Naive thymus-derived CD4-positive, alpha-beta T cell (primary cell): ENCODE measurements at regions of chr15 and their contacts with region 1.

Region 1: GRCh38 chr15:85330901-85331588 is 49.4 kb upstream of the AKAP13 start:
- DNase-seq: peak; percentile 12 to 71 (median 44)
- ATAC-seq: peak; percentile 70
- H3K4me3 ChIP-seq: peak overlapping the region; percentile 57
- H3K4me3 Mint-ChIP-seq: peak overlapping the region; percentile 88 to 100 (median 96)
- H3K27ac ChIP-seq: peak overlapping the region; percentile 65
- H3K27ac Mint-ChIP-seq: peak overlapping the region; percentile 74 to 97 (median 95)
- H3K4me1 ChIP-seq: peaks cover 18 to 24% of the 10 kb centered on the region in 2 donors
- H3K4me1 Mint-ChIP-seq: peaks cover 34 to 54% (median 47%) of the 10 kb centered on the region in 7 donors
- H3K27me3 ChIP-seq: no peaks in the 10 kb centered on the region
- H3K27me3 Mint-ChIP-seq: no peaks in the 10 kb centered on the region

Region 2: GRCh38 chr15:84734794-84735479 is 596.1 kb before region 1 on chr15:
- CTCF ChIA-PET with region 1: no interaction called
- POLR2A ChIA-PET with region 1: no interaction called
- intact Hi-C with region 1: no loop called
- DNase-seq: peak in 8 of 9 donors; percentile 69 to 83 (median 78)
- ATAC-seq: peak; percentile 85
- H3K4me3 ChIP-seq: peak overlapping the region; percentile 56
- H3K4me3 Mint-ChIP-seq: peak overlapping the region; percentile 71 to 89 (median 84)
- H3K27ac ChIP-seq: peak overlapping the region; percentile 67
- H3K27ac Mint-ChIP-seq: peak overlapping the region; percentile 89 to 96 (median 93)
- H3K4me1 ChIP-seq: peaks cover 34 to 47% of the 10 kb centered on the region in 2 donors
- H3K4me1 Mint-ChIP-seq: peaks cover 36 to 62% (median 50%) of the 10 kb centered on the region in 7 donors
- H3K27me3 ChIP-seq: no peaks in the 10 kb centered on the region
- H3K27me3 Mint-ChIP-seq: no peaks in the 10 kb centered on the region

Region 3: GRCh38 chr15:84904419-84904818 is 426.6 kb before region 1 on chr15:
- CTCF ChIA-PET with region 1: no interaction called
- POLR2A ChIA-PET with region 1: no interaction called
- intact Hi-C with region 1: no loop called
- DNase-seq: no peak
- ATAC-seq: no peak
- H3K4me3 ChIP-seq: no peak overlapping the region
- H3K4me3 Mint-ChIP-seq: no peak overlapping the region
- H3K27ac ChIP-seq: no peak overlapping the region
- H3K27ac Mint-ChIP-seq: no peak overlapping the region
- H3K4me1 ChIP-seq: no peaks in the 10 kb centered on the region
- H3K4me1 Mint-ChIP-seq: no peaks in the 10 kb centered on the region
- H3K27me3 ChIP-seq: no peaks in the 10 kb centered on the region
- H3K27me3 Mint-ChIP-seq: peaks cover 0 to 7% (median 0%) of the 10 kb centered on the region in 5 donors

Region 4: GRCh38 chr15:85318048-85318731 is 12.9 kb before region 1 on chr15:
- CTCF ChIA-PET with region 1: interaction called, 8 read pairs
- POLR2A ChIA-PET with region 1: interaction called, 9 read pairs
- intact Hi-C with region 1: loop called (anchors 1 kb)
- DNase-seq: peak in 1 of 9 donors; percentile 29
- ATAC-seq: peak; percentile 61
- H3K4me3 ChIP-seq: no peak overlapping the region
- H3K4me3 Mint-ChIP-seq: peak overlapping the region in 2 of 10 donors; percentile 16 to 74
- H3K27ac ChIP-seq: no peak overlapping the region
- H3K27ac Mint-ChIP-seq: peak overlapping the region in 4 of 9 donors; percentile 22 to 90 (median 27)
- H3K4me1 ChIP-seq: peaks cover 28 to 29% of the 10 kb centered on the region in 2 donors
- H3K4me1 Mint-ChIP-seq: peaks cover 22 to 53% (median 35%) of the 10 kb centered on the region in 7 donors
- H3K27me3 ChIP-seq: no peaks in the 10 kb centered on the region
- H3K27me3 Mint-ChIP-seq: no peaks in the 10 kb centered on the region

Region 5: DNA sequence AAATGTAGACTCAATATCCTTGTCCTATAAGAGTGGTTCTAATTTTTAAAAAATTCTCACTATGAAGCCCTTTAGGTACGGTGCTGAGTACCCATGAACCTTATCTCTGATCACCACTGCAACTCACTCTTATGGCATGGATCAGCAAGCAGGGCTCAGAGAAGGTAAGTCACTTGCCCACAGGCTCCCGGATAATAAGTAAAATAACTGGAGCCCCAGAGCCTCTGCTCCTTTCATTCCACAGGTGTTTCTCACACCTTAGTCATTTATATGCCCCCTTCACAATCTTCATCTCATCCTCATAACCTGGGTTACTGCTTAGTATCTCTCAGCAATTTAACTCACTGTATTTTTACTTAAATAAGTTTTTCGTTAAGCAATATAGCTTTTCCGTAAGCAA is 20.9 kb after region 1 on chr15:
- CTCF ChIA-PET with region 1: no interaction called
- POLR2A ChIA-PET with region 1: no interaction called
- intact Hi-C with region 1: no loop called
- DNase-seq: no peak
- ATAC-seq: no peak
- H3K4me3 ChIP-seq: no peak overlapping the region
- H3K4me3 Mint-ChIP-seq: no peak overlapping the region
- H3K27ac ChIP-seq: no peak overlapping the region
- H3K27ac Mint-ChIP-seq: no peak overlapping the region
- H3K4me1 ChIP-seq: no peaks in the 10 kb centered on the region
- H3K4me1 Mint-ChIP-seq: peaks cover 0 to 15% (median 7%) of the 10 kb centered on the region in 7 donors
- H3K27me3 ChIP-seq: no peaks in the 10 kb centered on the region
- H3K27me3 Mint-ChIP-seq: peaks cover 0 to 9% (median 0%) of the 10 kb centered on the region in 5 donors

Region 6: DNA sequence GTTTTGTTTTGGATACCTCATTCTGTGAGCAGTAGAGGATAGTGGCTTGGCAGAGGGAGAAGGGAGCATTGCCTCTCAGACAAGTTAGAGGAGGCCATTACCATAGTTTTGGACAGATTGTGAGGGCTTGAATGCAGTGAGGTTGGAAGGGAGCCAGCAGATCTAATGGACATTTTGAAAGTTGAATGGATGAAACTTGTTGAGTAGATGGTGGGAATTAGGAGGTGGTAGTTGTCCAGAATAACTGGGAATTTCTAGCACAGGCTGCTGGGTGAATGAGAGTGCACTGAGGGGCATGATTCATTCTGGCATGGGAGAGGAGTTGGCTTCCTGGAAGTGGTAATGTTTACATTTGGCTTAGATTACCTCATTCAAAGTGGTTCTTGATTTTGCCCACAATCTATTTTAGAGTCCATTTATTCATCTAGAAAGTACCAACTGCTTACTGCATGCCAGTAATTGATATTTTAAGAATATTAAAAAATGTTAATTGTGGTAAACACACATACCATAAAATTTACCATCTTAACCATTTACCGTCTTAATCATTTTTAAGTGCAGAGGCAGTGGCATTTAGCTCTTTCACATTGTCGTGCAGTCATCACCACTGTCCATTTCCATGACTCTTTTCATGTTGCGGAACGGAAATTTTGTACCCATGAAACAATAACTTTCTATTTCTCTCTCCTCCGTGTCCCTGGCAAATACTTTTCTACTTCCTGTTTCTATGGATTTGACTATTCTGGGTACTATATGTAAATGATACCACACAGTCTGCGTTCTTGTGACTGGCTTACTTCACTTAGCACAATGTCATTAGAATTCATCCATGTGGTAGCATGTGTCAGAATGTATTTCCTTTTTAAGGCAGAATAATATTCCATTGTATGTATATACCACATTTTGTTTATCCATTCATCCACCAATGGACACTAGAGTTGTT is 77.0 kb after region 1 on chr15:
- CTCF ChIA-PET with region 1: interaction called, 34 read pairs
- POLR2A ChIA-PET with region 1: interaction called, 13 read pairs
- intact Hi-C with region 1: loop called (anchors 1 kb)
- DNase-seq: peak in 2 of 9 donors; percentile 23 to 27
- ATAC-seq: peak; percentile 81
- H3K4me3 ChIP-seq: no peak overlapping the region
- H3K4me3 Mint-ChIP-seq: peak overlapping the region; percentile 0 to 81 (median 46)
- H3K27ac ChIP-seq: no peak overlapping the region
- H3K27ac Mint-ChIP-seq: peak overlapping the region; percentile 8 to 92 (median 83)
- H3K4me1 ChIP-seq: peaks cover 24 to 40% of the 10 kb centered on the region in 2 donors
- H3K4me1 Mint-ChIP-seq: peaks cover 43 to 91% (median 73%) of the 10 kb centered on the region in 7 donors
- H3K27me3 ChIP-seq: no peaks in the 10 kb centered on the region
- H3K27me3 Mint-ChIP-seq: no peaks in the 10 kb centered on the region

Region 7: DNA sequence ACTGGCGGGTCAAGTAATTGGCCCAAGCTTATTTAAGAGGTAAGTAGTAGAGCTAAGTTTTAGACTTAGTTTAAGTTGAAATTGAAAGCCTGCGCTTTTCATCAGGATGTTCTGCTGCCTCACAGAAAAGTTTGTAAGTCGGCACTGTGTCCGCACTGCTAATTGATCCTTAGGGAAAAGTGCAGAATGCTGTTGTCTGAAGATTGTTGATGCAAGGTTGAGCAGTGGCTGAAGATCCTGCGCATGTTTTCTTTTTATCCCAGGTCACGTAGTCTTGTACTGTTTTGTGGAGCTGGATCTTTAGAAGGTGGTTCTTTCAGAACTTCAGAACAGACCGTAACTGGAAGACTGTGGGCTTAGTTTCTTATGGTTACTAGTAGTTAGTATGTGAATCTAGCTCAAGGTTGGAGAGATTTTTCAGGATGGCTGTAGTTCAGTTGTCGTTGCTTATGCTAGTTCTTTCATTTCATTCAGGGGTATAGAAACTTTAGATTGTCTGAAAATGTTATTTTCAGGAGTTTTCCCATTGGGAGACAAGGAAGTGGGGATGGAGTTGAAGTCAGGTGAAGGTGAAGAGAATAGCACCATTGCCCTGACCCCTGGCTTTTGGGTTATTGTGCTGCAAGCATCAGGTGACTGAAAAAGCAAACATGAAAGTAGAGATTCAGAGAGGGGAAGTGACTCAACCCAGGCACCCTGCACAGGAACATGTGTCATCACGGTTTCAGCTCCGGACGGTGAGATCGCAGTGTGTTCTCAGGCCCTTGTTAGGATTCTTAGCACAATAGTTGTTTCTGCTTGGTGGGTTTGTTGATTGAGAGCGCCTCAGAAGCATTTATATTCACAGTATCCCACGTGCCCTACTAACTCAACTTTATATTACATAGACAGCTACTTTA is 82.2 kb after region 1 on chr15:
- CTCF ChIA-PET with region 1: interaction called, 34 read pairs
- POLR2A ChIA-PET with region 1: interaction called, 13 read pairs
- intact Hi-C with region 1: loop called (anchors 1 kb)
- DNase-seq: peak; percentile 21 to 68 (median 43)
- ATAC-seq: peak; percentile 96
- H3K4me3 ChIP-seq: no peak overlapping the region
- H3K4me3 Mint-ChIP-seq: peak overlapping the region; percentile 18 to 81 (median 72)
- H3K27ac ChIP-seq: peak overlapping the region; percentile 47
- H3K27ac Mint-ChIP-seq: peak overlapping the region; percentile 71 to 91 (median 87)
- H3K4me1 ChIP-seq: peaks cover 26 to 29% of the 10 kb centered on the region in 2 donors
- H3K4me1 Mint-ChIP-seq: peaks cover 29 to 76% (median 63%) of the 10 kb centered on the region in 7 donors
- H3K27me3 ChIP-seq: no peaks in the 10 kb centered on the region
- H3K27me3 Mint-ChIP-seq: no peaks in the 10 kb centered on the region

Region 8: GRCh38 chr15:85504749-85505676 is 174.0 kb after region 1 on chr15:
- CTCF ChIA-PET with region 1: no interaction called
- POLR2A ChIA-PET with region 1: no interaction called
- intact Hi-C with region 1: loop called in 1 of 2 experiments (anchors 1 kb)
- DNase-seq: peak in 7 of 9 donors; percentile 7 to 51 (median 37)
- ATAC-seq: peak; percentile 66
- H3K4me3 ChIP-seq: no peak overlapping the region
- H3K4me3 Mint-ChIP-seq: peak overlapping the region in 1 of 10 donors; percentile 20
- H3K27ac ChIP-seq: no peak overlapping the region
- H3K27ac Mint-ChIP-seq: peak overlapping the region in 3 of 9 donors; percentile 13 to 30 (median 22)
- H3K4me1 ChIP-seq: peaks cover 11 to 13% of the 10 kb centered on the region in 2 donors
- H3K4me1 Mint-ChIP-seq: peaks cover 26 to 90% (median 71%) of the 10 kb centered on the region in 7 donors
- H3K27me3 ChIP-seq: no peaks in the 10 kb centered on the region
- H3K27me3 Mint-ChIP-seq: no peaks in the 10 kb centered on the region